Aorta (tissue), 5 donors: ENCODE measurements at regions of chr12 and their contacts with region 1.

Region 1: DNA sequence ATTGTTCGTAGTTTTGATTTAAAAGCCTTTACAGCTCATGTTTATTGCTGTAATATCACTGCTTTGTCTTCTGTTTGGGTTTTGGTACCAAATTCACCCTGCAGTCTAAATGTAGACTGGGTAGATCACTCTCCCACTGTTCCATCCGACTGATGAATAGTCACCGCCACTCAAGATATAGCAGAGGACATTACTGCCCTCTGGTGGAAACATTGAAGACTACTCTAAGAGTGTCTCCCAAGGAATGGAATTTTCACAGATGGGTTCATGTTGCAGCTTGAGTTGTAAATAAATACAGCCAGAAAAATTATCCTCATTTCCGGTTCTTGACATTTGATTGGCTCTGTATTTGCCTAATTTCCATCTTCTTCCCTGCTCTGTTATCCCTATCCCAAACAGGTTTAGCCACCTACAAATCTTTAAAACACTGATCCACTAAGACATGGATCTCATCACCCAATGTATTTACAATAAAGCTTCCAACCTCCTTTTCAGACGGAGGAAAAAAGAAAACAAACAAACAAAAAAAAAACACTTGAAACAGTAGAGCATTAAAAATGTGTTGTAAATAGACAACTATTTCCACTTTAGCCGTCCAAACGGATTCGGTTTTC is 198.3 kb upstream of the CPNE8 start:
- DNase-seq: no peak
- ATAC-seq: peak; percentile 90
- H3K4me3 ChIP-seq: no peak overlapping the region
- H3K27ac ChIP-seq: no peak overlapping the region
- H3K4me1 ChIP-seq: no peaks in the 10 kb centered on the region
- H3K27me3 ChIP-seq: no peaks in the 10 kb centered on the region

Region 2: DNA sequence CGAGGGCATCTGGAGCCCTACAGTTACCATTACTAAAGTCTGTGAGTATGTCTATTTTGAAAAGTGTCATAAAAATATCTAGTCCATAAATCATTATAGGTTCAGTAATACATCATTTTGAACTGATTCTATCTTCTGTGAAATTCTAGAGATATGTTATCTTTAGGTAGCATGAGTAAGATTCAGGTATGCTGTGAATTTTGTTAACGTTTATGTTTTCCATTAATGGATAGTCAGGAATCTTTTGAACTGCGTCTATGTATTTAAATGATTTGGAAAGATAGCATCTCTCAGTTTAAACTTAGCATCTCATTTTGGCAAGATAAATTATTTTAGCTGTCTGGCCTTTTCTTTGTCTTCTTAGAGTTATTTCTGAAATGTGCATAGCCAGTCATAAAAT is 778.8 kb before region 1 on chr12:
- intact Hi-C with region 1: loop called (anchors 5 kb)
- DNase-seq: no peak
- ATAC-seq: no peak
- H3K4me3 ChIP-seq: no peak overlapping the region
- H3K27ac ChIP-seq: no peak overlapping the region
- H3K4me1 ChIP-seq: no peaks in the 10 kb centered on the region
- H3K27me3 ChIP-seq: no peaks in the 10 kb centered on the region

Region 3: GRCh38 chr12:38332814-38333213 is 770.8 kb before region 1 on chr12:
- intact Hi-C with region 1: loop called (anchors 5 kb)
- DNase-seq: no peak
- ATAC-seq: no peak
- H3K4me3 ChIP-seq: no peak overlapping the region
- H3K27ac ChIP-seq: no peak overlapping the region
- H3K4me1 ChIP-seq: no peaks in the 10 kb centered on the region
- H3K27me3 ChIP-seq: no peaks in the 10 kb centered on the region

Region 4: DNA sequence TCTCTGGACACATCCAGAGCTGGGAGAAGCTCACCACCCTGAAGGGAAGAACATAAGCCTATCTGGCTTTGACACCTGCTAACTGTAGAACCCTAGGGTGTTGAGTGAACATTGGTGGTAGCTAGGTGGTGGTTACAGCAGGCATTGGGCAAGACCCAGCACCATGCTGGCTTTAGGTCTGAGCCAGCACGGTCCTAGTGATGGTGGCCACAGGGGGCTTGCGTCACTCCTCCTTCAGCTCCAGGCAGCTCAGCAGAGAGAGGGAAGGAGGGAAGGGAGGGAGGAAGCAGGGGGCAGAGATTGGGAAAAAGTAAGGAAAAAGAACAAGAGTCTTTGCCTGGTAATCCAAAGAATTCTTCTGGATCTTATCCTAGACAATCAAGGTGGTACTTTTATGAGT is 83.4 kb before region 1 on chr12:
- intact Hi-C with region 1: no loop called
- DNase-seq: no peak
- ATAC-seq: no peak
- H3K4me3 ChIP-seq: no peak overlapping the region
- H3K27ac ChIP-seq: no peak overlapping the region
- H3K4me1 ChIP-seq: no peaks in the 10 kb centered on the region
- H3K27me3 ChIP-seq: no peaks in the 10 kb centered on the region